ENCODE measurements at regions of chr4 and their contacts with region 1.

Region 1: DNA sequence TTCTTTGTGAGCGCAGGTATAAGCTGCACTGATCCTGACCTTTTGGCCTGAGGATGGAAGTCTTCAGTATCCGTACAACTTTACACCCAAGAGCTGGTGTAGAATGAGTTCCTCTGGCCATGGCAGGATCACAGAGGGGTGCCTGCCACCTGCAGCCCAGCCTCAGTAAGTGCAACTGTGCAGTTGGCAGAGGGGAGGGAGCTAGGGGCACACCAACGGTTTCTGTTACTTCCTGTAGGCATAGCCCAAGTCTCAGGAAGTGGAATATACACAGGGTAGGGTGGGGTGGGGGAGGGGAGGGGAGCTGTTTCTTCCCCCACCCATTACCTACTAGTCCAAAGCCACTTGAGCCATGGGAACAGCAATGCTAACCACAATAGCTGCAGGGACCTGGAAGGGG is 85.4 kb upstream of the GBA3 start:
- DNase-seq: no peak
- ATAC-seq: peak; percentile 93
- H3K4me3 ChIP-seq: no peak overlapping the region
- H3K27ac ChIP-seq: no peak overlapping the region
- H3K4me1 ChIP-seq: no peaks in the 10 kb centered on the region
- H3K27me3 ChIP-seq: no peaks in the 10 kb centered on the region
- CTCF ChIP-seq: peak; percentile 15 to 61 (median 56); a peak in 5 of 6 replicates
- EP300 ChIP-seq: no peak
- POLR2A ChIP-seq: no peak
- RAD21 ChIP-seq: peak; percentile 30; the same call in 1 of the 2 replicates

Region 2: DNA sequence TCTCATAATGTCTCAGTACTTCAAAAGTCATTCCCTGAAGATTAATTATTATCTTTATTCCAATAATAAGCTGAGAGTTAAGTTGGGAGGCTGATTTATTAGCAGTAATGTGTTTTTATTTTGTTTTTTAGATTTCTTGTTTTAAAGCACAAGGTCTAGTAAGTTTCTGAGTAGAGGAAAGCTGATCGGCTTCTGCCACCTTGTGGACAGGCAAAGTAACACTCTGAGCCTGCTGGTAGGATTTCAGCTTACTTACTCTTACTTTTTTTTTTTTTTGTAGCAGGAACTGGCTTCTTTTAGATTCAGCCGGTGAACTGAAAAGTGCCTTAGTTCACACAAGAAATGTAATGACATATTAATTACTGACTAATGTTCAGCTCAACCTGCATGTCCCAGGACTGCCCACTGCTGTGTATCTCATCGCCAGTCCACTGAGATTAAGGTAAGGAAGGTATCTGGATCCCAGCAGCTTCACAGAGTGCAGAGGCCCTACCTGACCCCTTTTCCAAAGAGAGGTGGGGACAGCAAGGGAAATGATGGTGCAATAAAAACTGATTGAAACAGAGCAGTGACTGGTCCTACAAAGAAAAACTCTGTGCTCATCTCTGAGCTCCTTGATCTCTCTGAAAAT is 218.0 kb before region 1 on chr4:
- CTCF ChIA-PET with region 1: interaction called, 28 read pairs
- POLR2A ChIA-PET with region 1: no interaction called
- RAD21 ChIA-PET with region 1: interaction called, 5 read pairs
- SMC1A ChIA-PET with region 1: interaction called, 11 read pairs
- in situ Hi-C with region 1: no loop called
- intact Hi-C with region 1: no loop called
- DNase-seq: no peak
- ATAC-seq: peak; percentile 92
- H3K4me3 ChIP-seq: no peak overlapping the region
- H3K27ac ChIP-seq: no peak overlapping the region
- H3K4me1 ChIP-seq: no peaks in the 10 kb centered on the region
- H3K27me3 ChIP-seq: no peaks in the 10 kb centered on the region
- CTCF ChIP-seq: peak; percentile 67 to 71 (median 70)
- EP300 ChIP-seq: no peak
- POLR2A ChIP-seq: no peak
- RAD21 ChIP-seq: peak; percentile 82

Region 3: GRCh38 chr4:22434895-22435294 is 172.5 kb before region 1 on chr4:
- CTCF ChIA-PET with region 1: interaction called, 22 read pairs
- POLR2A ChIA-PET with region 1: no interaction called
- RAD21 ChIA-PET with region 1: interaction called, 9 read pairs
- SMC1A ChIA-PET with region 1: interaction called, 9 read pairs
- in situ Hi-C with region 1: no loop called
- intact Hi-C with region 1: no loop called
- DNase-seq: no peak
- ATAC-seq: peak; percentile 91
- H3K4me3 ChIP-seq: no peak overlapping the region
- H3K27ac ChIP-seq: no peak overlapping the region
- H3K4me1 ChIP-seq: no peaks in the 10 kb centered on the region
- H3K27me3 ChIP-seq: no peaks in the 10 kb centered on the region
- CTCF ChIP-seq: peak; percentile 14 to 56 (median 44); a peak in 3 of 6 replicates
- EP300 ChIP-seq: no peak
- POLR2A ChIP-seq: no peak
- RAD21 ChIP-seq: peak; percentile 13; the same call in 1 of the 2 replicates

Region 4: GRCh38 chr4:22463179-22463578 is 144.2 kb before region 1 on chr4:
- CTCF ChIA-PET with region 1: interaction called, 20 read pairs
- POLR2A ChIA-PET with region 1: interaction called, 3 read pairs
- RAD21 ChIA-PET with region 1: interaction called, 7 read pairs
- SMC1A ChIA-PET with region 1: interaction called, 25 read pairs
- in situ Hi-C with region 1: no loop called
- intact Hi-C with region 1: no loop called
- DNase-seq: no peak
- ATAC-seq: peak; percentile 65
- H3K4me3 ChIP-seq: no peak overlapping the region
- H3K27ac ChIP-seq: no peak overlapping the region
- H3K4me1 ChIP-seq: no peaks in the 10 kb centered on the region
- H3K27me3 ChIP-seq: no peaks in the 10 kb centered on the region
- CTCF ChIP-seq: no peak
- EP300 ChIP-seq: no peak
- POLR2A ChIP-seq: no peak
- RAD21 ChIP-seq: no peak

Region 5: DNA sequence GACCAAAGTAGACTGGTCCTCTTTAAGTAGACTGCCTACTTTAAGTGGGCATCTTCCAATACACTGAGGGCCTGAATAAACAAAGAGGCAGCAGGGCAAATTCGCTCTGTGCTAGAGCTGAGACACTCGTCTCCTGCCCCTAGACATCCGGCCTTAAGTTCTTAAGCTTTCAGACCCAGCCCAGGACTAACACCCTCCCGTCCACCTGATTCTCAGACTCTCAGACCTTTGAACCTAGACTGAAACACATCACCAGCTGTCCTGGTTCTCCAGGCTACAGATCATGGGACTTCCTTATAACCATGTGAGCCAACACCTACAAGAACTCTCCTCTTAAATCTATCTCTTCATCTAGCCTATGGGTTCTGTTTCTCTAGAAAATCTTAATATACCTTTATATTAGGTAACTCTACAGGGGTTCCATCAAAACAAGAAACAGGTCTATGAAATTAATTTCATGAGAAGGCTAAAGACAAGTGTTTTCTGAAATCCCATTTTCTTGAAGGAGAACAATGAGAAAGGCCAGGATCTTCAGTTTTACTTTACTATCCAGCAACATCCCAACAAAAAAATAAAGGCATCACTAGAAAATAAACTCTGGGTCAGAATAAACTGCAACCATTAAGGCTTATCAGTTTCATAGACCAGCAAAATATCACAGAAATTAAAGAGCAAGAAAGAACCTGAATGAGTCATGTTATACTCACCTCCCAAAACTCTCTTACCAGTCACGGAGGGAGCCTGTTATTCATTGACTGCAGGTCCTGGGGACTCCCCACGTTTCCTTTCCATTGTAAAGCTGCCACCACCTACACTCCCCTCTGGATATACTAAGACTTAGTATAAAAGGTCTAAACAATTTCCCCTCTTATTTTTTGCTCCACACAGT is 106.3 kb before region 1 on chr4:
- CTCF ChIA-PET with region 1: interaction called, 12 read pairs
- POLR2A ChIA-PET with region 1: interaction called, 11 read pairs
- RAD21 ChIA-PET with region 1: interaction called, 43 read pairs
- SMC1A ChIA-PET with region 1: interaction called, 44 read pairs
- in situ Hi-C with region 1: no loop called
- intact Hi-C with region 1: no loop called
- DNase-seq: peak; percentile 28
- ATAC-seq: peak; percentile 77
- H3K4me3 ChIP-seq: no peak overlapping the region
- H3K27ac ChIP-seq: no peak overlapping the region
- H3K4me1 ChIP-seq: no peaks in the 10 kb centered on the region
- H3K27me3 ChIP-seq: no peaks in the 10 kb centered on the region
- CTCF ChIP-seq: no peak
- EP300 ChIP-seq: peak in 1 of 2 experiments; percentile 70; a peak in 1 of 4 replicates
- POLR2A ChIP-seq: no peak
- RAD21 ChIP-seq: no peak

Region 6: DNA sequence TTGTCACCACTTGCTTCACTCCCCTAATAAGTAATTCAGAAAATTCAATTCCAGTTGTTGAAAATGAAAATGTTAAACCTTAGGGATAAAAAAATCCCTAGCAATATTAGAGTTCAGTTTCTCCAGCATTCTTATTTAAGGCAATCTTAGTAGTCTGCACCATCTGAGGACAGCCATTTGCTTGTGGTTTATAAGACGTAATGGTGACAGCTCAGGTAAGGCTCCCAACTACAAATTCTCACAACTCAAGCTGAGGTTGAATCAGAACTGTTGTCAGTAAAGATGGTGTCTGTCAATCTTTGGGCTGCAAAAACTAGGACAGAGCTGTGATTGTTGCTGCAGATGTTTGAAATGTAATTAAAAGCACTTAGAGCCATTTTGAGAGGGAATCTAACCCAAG is 75.3 kb before region 1 on chr4:
- CTCF ChIA-PET with region 1: no interaction called
- POLR2A ChIA-PET with region 1: no interaction called
- RAD21 ChIA-PET with region 1: no interaction called
- SMC1A ChIA-PET with region 1: no interaction called
- in situ Hi-C with region 1: no loop called
- intact Hi-C with region 1: no loop called
- DNase-seq: no peak
- ATAC-seq: no peak
- H3K4me3 ChIP-seq: no peak overlapping the region
- H3K27ac ChIP-seq: no peak overlapping the region
- H3K4me1 ChIP-seq: no peaks in the 10 kb centered on the region
- H3K27me3 ChIP-seq: no peaks in the 10 kb centered on the region
- CTCF ChIP-seq: no peak
- EP300 ChIP-seq: no peak
- POLR2A ChIP-seq: no peak
- RAD21 ChIP-seq: no peak

Region 7: GRCh38 chr4:22595684-22596083 is 11.7 kb before region 1 on chr4:
- CTCF ChIA-PET with region 1: interaction called, 8 read pairs
- POLR2A ChIA-PET with region 1: interaction called, 10 read pairs
- RAD21 ChIA-PET with region 1: interaction called, 17 read pairs
- SMC1A ChIA-PET with region 1: interaction called, 22 read pairs
- in situ Hi-C with region 1: no loop called
- intact Hi-C with region 1: no loop called
- DNase-seq: peak; percentile 17
- ATAC-seq: peak; percentile 84
- H3K4me3 ChIP-seq: no peak overlapping the region
- H3K27ac ChIP-seq: no peak overlapping the region
- H3K4me1 ChIP-seq: no peaks in the 10 kb centered on the region
- H3K27me3 ChIP-seq: no peaks in the 10 kb centered on the region
- CTCF ChIP-seq: no peak
- EP300 ChIP-seq: peak; percentile 58 to 75; a peak in 2 of 4 replicates
- POLR2A ChIP-seq: no peak
- RAD21 ChIP-seq: no peak

Region 8: DNA sequence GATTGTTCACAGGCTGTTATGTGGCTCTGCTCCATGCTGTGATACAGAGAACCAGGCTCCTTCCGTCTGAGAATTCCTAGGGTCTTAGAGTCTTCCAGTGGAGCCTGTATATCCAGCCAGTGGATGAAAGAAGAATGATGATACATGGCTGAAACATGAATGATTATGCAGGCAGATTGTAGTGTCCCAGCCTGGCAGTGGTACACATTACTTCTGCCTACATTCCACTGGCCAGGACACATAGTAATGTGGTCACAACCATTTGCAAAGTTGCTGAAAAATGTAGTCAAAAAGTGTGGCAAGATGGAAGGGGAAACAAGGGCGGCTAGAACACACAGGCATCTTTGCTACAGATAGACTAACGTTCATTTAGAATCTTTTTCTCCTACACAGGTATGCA is 80.9 kb after region 1 on chr4:
- CTCF ChIA-PET with region 1: interaction called, 10 read pairs
- POLR2A ChIA-PET with region 1: interaction called, 3 read pairs
- RAD21 ChIA-PET with region 1: interaction called, 7 read pairs
- SMC1A ChIA-PET with region 1: interaction called, 7 read pairs
- in situ Hi-C with region 1: no loop called
- intact Hi-C with region 1: loop called (anchors 5 kb)
- DNase-seq: no peak
- ATAC-seq: no peak
- H3K4me3 ChIP-seq: no peak overlapping the region
- H3K27ac ChIP-seq: no peak overlapping the region
- H3K4me1 ChIP-seq: no peaks in the 10 kb centered on the region
- H3K27me3 ChIP-seq: no peaks in the 10 kb centered on the region
- CTCF ChIP-seq: no peak
- EP300 ChIP-seq: no peak
- POLR2A ChIP-seq: no peak
- RAD21 ChIP-seq: no peak

Region 9: GRCh38 chr4:23028875-23029274 is 421.5 kb after region 1 on chr4:
- CTCF ChIA-PET with region 1: no interaction called
- POLR2A ChIA-PET with region 1: no interaction called
- RAD21 ChIA-PET with region 1: no interaction called
- SMC1A ChIA-PET with region 1: no interaction called
- in situ Hi-C with region 1: no loop called
- intact Hi-C with region 1: no loop called
- DNase-seq: no peak
- ATAC-seq: peak; percentile 90
- H3K4me3 ChIP-seq: no peak overlapping the region
- H3K27ac ChIP-seq: no peak overlapping the region
- H3K4me1 ChIP-seq: no peaks in the 10 kb centered on the region
- H3K27me3 ChIP-seq: no peaks in the 10 kb centered on the region
- CTCF ChIP-seq: no peak
- EP300 ChIP-seq: no peak
- POLR2A ChIP-seq: no peak
- RAD21 ChIP-seq: no peak

Region 10: GRCh38 chr4:23122666-23123400 is 515.5 kb after region 1 on chr4:
- CTCF ChIA-PET with region 1: no interaction called
- POLR2A ChIA-PET with region 1: no interaction called
- RAD21 ChIA-PET with region 1: no interaction called
- SMC1A ChIA-PET with region 1: no interaction called
- in situ Hi-C with region 1: no loop called
- intact Hi-C with region 1: no loop called
- DNase-seq: no peak
- ATAC-seq: no peak
- H3K4me3 ChIP-seq: no peak overlapping the region
- H3K27ac ChIP-seq: no peak overlapping the region
- H3K4me1 ChIP-seq: no peaks in the 10 kb centered on the region
- H3K27me3 ChIP-seq: no peaks in the 10 kb centered on the region
- CTCF ChIP-seq: no peak
- EP300 ChIP-seq: no peak
- POLR2A ChIP-seq: no peak
- RAD21 ChIP-seq: no peak

Measured in GM12878 (cell line).